MCF 10A (cell line): ENCODE measurements at regions of chr14 and their contacts with region 1.

Region 1: GRCh38 chr14:56339855-56340701 is 221.9 kb downstream of the PELI2 start:
- DNase-seq: peak; percentile 91
- H3K4me3 Mint-ChIP-seq: no peak overlapping the region
- H3K27ac Mint-ChIP-seq: no peak overlapping the region
- H3K4me1 Mint-ChIP-seq: peaks cover 9% of the 10 kb centered on the region
- H3K27me3 Mint-ChIP-seq: no peaks in the 10 kb centered on the region
- CTCF ChIP-seq: peak; percentile 45

Region 2: GRCh38 chr14:55707365-55707804 is 632.7 kb before region 1 on chr14:
- CTCF ChIA-PET with region 1: interaction called, 6 read pairs
- POLR2A ChIA-PET with region 1: no interaction called
- intact Hi-C with region 1: loop called (anchors 1 kb)
- DNase-seq: peak; percentile 50
- H3K4me3 Mint-ChIP-seq: no peak overlapping the region
- H3K27ac Mint-ChIP-seq: no peak overlapping the region
- H3K4me1 Mint-ChIP-seq: peaks cover 25% of the 10 kb centered on the region
- H3K27me3 Mint-ChIP-seq: no peaks in the 10 kb centered on the region
- CTCF ChIP-seq: peak; percentile 58

Region 3: GRCh38 chr14:55731881-55732498 is 608.1 kb before region 1 on chr14:
- CTCF ChIA-PET with region 1: interaction called, 4 read pairs
- POLR2A ChIA-PET with region 1: interaction called, 3 read pairs
- intact Hi-C with region 1: loop called (anchors 1 kb)
- DNase-seq: peak; percentile 54
- H3K4me3 Mint-ChIP-seq: no peak overlapping the region
- H3K27ac Mint-ChIP-seq: no peak overlapping the region
- H3K4me1 Mint-ChIP-seq: peaks cover 6% of the 10 kb centered on the region
- H3K27me3 Mint-ChIP-seq: no peaks in the 10 kb centered on the region
- CTCF ChIP-seq: peak; percentile 46

Region 4: GRCh38 chr14:56543436-56543835 is 203.4 kb after region 1 on chr14:
- CTCF ChIA-PET with region 1: no interaction called
- POLR2A ChIA-PET with region 1: no interaction called
- intact Hi-C with region 1: no loop called
- DNase-seq: no peak
- H3K4me3 Mint-ChIP-seq: no peak overlapping the region
- H3K27ac Mint-ChIP-seq: no peak overlapping the region
- H3K4me1 Mint-ChIP-seq: no peaks in the 10 kb centered on the region
- H3K27me3 Mint-ChIP-seq: no peaks in the 10 kb centered on the region
- CTCF ChIP-seq: no peak

Region 5: GRCh38 chr14:57089901-57090300 is 749.8 kb after region 1 on chr14:
- CTCF ChIA-PET with region 1: no interaction called
- POLR2A ChIA-PET with region 1: no interaction called
- intact Hi-C with region 1: no loop called
- DNase-seq: no peak
- H3K4me3 Mint-ChIP-seq: no peak overlapping the region
- H3K27ac Mint-ChIP-seq: no peak overlapping the region
- H3K4me1 Mint-ChIP-seq: no peaks in the 10 kb centered on the region
- H3K27me3 Mint-ChIP-seq: peaks cover 34% of the 10 kb centered on the region
- CTCF ChIP-seq: no peak